ENCODE measurements at regions of chr10 and their contacts with region 1.

Region 1: DNA sequence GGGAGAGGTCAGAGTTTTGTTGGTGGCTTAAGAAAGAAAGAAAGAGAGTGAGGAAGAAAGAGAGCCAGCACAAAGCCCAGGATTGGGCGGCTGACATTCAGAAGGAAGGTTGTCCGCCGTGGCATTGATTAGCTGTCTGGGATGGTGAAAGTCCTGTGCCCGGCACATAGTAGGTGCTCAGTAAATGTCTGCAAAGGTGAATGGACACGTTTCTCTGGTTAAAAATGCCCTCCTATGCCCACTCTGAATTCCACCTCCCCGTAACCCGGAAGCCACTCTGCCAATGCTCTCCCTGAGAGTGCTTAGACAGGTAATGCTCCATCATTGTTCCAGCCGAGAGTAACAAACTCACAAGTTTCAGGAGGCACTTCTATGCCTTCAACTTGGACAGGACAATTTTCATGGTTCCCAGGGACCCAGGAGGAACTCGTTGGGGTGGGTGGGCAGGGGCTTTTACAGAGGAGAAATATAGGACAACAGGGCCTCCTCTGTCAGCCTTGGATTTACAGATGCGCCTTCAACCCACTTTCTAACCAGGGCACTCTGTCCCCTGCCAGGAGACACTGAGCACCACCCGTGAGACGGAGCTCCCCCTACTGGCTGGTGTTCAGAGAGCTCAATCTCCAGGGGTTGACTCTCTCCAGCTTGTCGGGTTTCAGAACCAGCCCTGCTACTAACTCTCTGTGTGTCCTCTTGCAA is 411.5 kb upstream of the ZMIZ1 start:
- H3K4me3 Mint-ChIP-seq: no peak overlapping the region
- H3K27ac Mint-ChIP-seq: no peak overlapping the region
- H3K4me1 Mint-ChIP-seq: no peaks in the 10 kb centered on the region
- H3K27me3 Mint-ChIP-seq: peaks cover 16% of the 10 kb centered on the region

Region 2: DNA sequence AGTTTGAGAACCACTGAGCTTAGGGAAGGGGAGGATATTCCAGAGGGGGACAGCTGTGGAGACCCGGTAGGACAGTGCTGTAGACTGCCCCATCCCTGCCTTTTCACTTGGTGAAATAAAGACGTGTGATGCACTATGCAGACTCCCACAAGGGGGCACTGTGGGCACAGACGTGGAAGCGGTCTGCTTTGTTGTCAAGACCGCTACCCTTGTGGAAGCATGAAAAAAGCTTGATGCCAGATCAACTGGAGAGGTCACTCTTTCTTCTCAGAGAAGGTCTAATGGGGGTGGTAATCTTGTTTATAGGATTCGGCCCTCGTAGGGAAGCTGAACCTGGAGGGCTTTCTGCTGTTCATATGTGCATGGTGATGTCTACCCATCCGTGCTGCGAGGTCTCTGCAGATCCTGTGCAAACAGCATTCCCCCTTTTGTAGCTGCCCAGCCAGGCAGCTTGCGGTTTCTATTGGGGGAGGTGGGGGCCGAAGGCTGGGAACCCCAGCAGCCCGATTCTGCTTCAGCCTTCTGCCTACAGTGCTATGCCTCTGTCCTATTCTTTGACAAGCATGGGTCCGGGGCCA is 609.9 kb before region 1 on chr10:
- intact Hi-C with region 1: loop called (anchors 2 kb)
- H3K4me3 Mint-ChIP-seq: no peak overlapping the region
- H3K27ac Mint-ChIP-seq: no peak overlapping the region
- H3K4me1 Mint-ChIP-seq: peaks cover 44% of the 10 kb centered on the region
- H3K27me3 Mint-ChIP-seq: no peaks in the 10 kb centered on the region

Region 3: DNA sequence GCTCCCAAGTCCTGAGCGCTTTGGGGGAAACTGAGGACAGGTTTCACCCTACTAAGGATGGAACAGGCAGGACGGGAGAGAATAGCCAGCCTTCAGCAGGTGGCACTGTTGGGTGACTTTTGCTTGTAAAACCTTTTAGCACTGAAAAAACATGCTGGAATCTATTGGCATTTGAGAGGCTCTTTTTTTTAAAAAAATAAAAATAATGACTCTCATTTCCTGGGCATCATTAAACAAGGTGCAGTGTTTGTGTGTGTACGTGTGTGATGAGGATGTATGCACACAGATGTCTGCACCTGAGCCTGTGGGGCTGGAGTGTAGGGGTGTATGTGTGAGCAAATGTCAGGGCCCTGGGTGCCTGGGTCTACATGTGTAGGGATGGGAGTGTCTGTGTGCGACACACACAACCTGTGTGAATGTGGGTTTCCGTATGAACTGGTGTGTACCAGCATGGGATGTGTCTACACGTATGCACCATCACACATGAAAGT is 445.7 kb before region 1 on chr10:
- intact Hi-C with region 1: loop called (anchors 5 kb)
- H3K4me3 Mint-ChIP-seq: no peak overlapping the region
- H3K27ac Mint-ChIP-seq: no peak overlapping the region
- H3K4me1 Mint-ChIP-seq: peaks cover 16% of the 10 kb centered on the region
- H3K27me3 Mint-ChIP-seq: peaks cover 17% of the 10 kb centered on the region

Region 4: GRCh38 chr10:79023240-79024162 is 366.2 kb after region 1 on chr10:
- intact Hi-C with region 1: no loop called
- H3K4me3 Mint-ChIP-seq: no peak overlapping the region
- H3K27ac Mint-ChIP-seq: no peak overlapping the region
- H3K4me1 Mint-ChIP-seq: peaks cover 5% of the 10 kb centered on the region
- H3K27me3 Mint-ChIP-seq: peaks cover 14% of the 10 kb centered on the region

Measured in dendritic cell treated with granulocyte-macrophage colony-stimulating factor and Interleukin-4, amounts not matched to agents 40 ng/mL and 50 ng/mL, for 4 days (primary cell).